Naive thymus-derived CD4-positive, alpha-beta T cell (primary cell): ENCODE measurements at regions of chr20 and their contacts with region 1.

Region 1: DNA sequence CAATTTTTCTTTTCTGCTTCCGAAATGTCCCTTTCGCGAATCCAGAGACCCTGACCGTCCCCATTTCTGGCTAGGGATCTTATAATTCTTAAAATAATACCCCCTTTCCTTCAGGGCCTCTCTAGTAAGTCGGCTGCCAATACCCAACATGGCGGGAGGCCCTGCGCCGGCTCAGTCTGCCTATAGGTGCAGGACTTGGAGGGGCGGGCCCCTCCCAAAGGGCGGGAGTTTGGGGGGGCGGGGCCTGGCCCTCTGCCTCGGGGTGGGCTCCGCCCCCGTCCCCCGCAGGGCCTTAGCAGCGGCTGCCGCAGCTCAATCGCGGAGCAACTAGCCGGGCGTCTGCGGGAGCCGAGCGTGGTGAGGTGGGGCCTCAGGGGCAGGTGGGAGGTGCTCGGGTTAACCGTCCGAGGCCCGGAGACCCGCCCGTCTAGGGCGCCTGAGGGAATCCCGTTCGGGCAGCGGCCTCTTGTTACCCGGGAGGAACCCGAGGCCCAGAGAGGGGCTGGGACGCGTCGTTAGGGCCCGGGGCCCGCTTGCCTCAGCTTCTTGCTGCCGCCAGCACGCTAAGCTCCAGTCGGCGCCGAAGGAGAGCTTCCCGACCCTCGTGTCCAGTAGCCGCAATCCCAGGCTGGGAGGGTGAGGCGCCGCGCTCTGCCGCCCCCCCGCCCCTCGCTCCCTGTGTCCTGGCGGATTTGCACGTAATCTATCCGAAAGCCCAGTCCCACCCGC is at the start of gene CEP250:
- DNase-seq: peak; percentile 89 to 97 (median 96)
- ATAC-seq: peak; percentile 99
- H3K4me3 ChIP-seq: peak within 1 kb of the TSS; percentile 94
- H3K4me3 Mint-ChIP-seq: peak within 1 kb of the TSS; percentile 82 to 98 (median 93)
- H3K27ac ChIP-seq: peak within 1 kb of the TSS; percentile 94
- H3K27ac Mint-ChIP-seq: peak within 1 kb of the TSS; percentile 86 to 99 (median 98)
- H3K4me1 ChIP-seq: no peaks in the 10 kb centered on the region
- H3K4me1 Mint-ChIP-seq: peaks cover 0 to 38% (median 23%) of the 10 kb centered on the region in 7 donors
- H3K27me3 ChIP-seq: no peaks in the 10 kb centered on the region
- H3K27me3 Mint-ChIP-seq: no peaks in the 10 kb centered on the region
- total RNA-seq, gene CEP250: 34.5 to 75.0 (median 70.7) TPM

Region 2: GRCh38 chr20:34825530-34826362 is 629.3 kb before region 1 on chr20 and contains the start of gene NCOA6:
- CTCF ChIA-PET with region 1: no interaction called
- POLR2A ChIA-PET with region 1: no interaction called
- intact Hi-C with region 1: loop called in 1 of 2 experiments (anchors 1 kb)
- DNase-seq: peak; percentile 56 to 86 (median 74)
- ATAC-seq: peak; percentile 90
- H3K4me3 ChIP-seq: peak within 1 kb of the TSS; percentile 78
- H3K4me3 Mint-ChIP-seq: peak within 1 kb of the TSS; percentile 83 to 100 (median 98)
- H3K27ac ChIP-seq: peak within 1 kb of the TSS; percentile 76
- H3K27ac Mint-ChIP-seq: peak within 1 kb of the TSS; percentile 85 to 95 (median 91)
- H3K4me1 ChIP-seq: peaks cover 16 to 17% of the 10 kb centered on the region in 2 donors
- H3K4me1 Mint-ChIP-seq: peaks cover 30 to 50% (median 43%) of the 10 kb centered on the region in 7 donors
- H3K27me3 ChIP-seq: no peaks in the 10 kb centered on the region
- H3K27me3 Mint-ChIP-seq: peaks cover 0 to 17% (median 0%) of the 10 kb centered on the region in 5 donors
- total RNA-seq, gene NCOA6: 23.6 to 31.9 (median 29.3) TPM

Region 3: GRCh38 chr20:35277531-35278395 is 177.3 kb before region 1 on chr20 and contains the start of gene MMP24OS:
- CTCF ChIA-PET with region 1: no interaction called
- POLR2A ChIA-PET with region 1: interaction called, 3 read pairs
- intact Hi-C with region 1: loop called in 1 of 2 experiments (anchors 2 kb)
- DNase-seq: peak; percentile 77 to 90 (median 87)
- ATAC-seq: peak; percentile 95
- H3K4me3 ChIP-seq: peak within 1 kb of the TSS; percentile 99
- H3K4me3 Mint-ChIP-seq: peak within 1 kb of the TSS; percentile 84 to 97 (median 96)
- H3K27ac ChIP-seq: peak within 1 kb of the TSS; percentile 96
- H3K27ac Mint-ChIP-seq: peak within 1 kb of the TSS; percentile 95 to 99 (median 98)
- H3K4me1 ChIP-seq: peaks cover 11 to 18% of the 10 kb centered on the region in 2 donors
- H3K4me1 Mint-ChIP-seq: peaks cover 9 to 46% (median 28%) of the 10 kb centered on the region in 7 donors
- H3K27me3 ChIP-seq: no peaks in the 10 kb centered on the region
- H3K27me3 Mint-ChIP-seq: no peaks in the 10 kb centered on the region
- total RNA-seq, gene MMP24OS: 43.8 to 88.6 (median 69.4) TPM

Region 4: DNA sequence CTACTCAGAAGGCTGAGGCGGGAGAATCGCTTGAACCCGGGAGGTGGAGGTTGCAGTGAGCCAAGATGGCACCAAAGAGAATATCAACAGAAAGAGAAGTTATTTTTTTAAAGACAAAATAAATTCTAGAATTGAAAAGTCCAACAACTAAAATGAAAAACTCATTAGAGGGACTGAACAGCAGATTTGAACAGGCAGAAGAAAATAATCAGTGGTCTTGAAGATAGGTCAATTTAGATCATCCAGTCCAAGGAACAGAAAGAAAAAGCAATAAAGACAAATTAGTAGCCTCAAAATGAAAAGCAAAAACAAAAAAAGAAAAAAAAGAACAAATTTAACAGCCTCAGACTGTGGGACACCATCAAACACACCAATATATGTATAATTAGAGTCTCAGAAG is 49.3 kb before region 1 on chr20:
- CTCF ChIA-PET with region 1: no interaction called
- POLR2A ChIA-PET with region 1: no interaction called
- intact Hi-C with region 1: no loop called
- DNase-seq: no peak
- ATAC-seq: no peak
- H3K4me3 ChIP-seq: no peak overlapping the region
- H3K4me3 Mint-ChIP-seq: no peak overlapping the region
- H3K27ac ChIP-seq: no peak overlapping the region
- H3K27ac Mint-ChIP-seq: peak overlapping the region in 1 of 9 donors; percentile 64
- H3K4me1 ChIP-seq: peaks cover 8 to 9% of the 10 kb centered on the region in 2 donors
- H3K4me1 Mint-ChIP-seq: peaks cover 5 to 31% (median 22%) of the 10 kb centered on the region in 7 donors
- H3K27me3 ChIP-seq: no peaks in the 10 kb centered on the region
- H3K27me3 Mint-ChIP-seq: no peaks in the 10 kb centered on the region

Region 5: GRCh38 chr20:35490736-35491181 is 35.7 kb after region 1 on chr20:
- CTCF ChIA-PET with region 1: interaction called, 3 read pairs
- POLR2A ChIA-PET with region 1: interaction called, 32 read pairs
- intact Hi-C with region 1: loop called (anchors 1 to 2 kb)
- DNase-seq: peak; percentile 27 to 77 (median 67)
- ATAC-seq: peak; percentile 99
- H3K4me3 ChIP-seq: peak overlapping the region; percentile 92
- H3K4me3 Mint-ChIP-seq: peak overlapping the region; percentile 99 to 100 (median 99)
- H3K27ac ChIP-seq: peak overlapping the region; percentile 84
- H3K27ac Mint-ChIP-seq: peak overlapping the region; percentile 98 to 100 (median 99)
- H3K4me1 ChIP-seq: peaks cover 23 to 27% of the 10 kb centered on the region in 2 donors
- H3K4me1 Mint-ChIP-seq: peaks cover 47 to 92% (median 72%) of the 10 kb centered on the region in 7 donors
- H3K27me3 ChIP-seq: no peaks in the 10 kb centered on the region
- H3K27me3 Mint-ChIP-seq: no peaks in the 10 kb centered on the region

Region 6: DNA sequence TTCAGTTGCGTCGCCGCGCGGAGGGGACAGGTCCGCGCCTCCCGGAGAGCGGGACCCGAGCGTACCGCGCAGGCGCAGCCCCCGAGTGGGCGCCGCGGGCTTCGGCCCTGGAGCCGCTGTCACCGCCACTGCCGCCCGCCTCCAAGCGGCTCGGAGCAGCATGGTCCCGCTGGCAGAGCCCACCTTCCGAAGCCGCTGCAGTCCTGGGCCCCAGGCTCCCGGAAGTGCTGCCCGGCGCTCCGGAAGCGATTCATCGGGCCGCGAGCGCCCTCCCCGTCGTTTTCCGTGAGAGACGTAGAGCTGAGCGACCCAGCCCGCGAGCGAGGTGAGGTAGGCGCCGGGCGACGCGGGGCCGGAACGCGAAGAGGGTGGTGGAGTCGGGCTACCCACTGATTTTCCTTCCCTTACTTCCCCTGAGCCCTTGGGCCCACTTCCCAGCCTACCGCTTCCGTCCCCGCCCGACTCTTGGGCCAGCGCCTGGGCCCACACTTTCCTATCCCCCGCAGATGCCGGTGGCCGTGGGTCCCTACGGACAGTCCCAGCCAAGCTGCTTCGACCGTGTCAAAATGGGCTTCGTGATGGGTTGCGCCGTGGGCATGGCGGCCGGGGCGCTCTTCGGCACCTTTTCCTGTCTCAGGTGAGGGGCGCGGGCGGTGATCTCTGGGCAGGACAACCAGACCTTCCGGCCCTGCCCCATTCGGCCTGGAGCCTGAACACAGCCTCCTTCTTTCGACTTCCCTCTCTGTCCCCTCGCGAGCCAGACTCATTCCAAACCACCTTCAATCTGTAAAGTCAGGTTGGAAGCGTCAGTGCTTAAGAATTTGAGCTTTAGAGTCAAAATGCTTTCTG is 244.3 kb after region 1 on chr20 and contains the starts of genes NFS1 and ROMO1:
- CTCF ChIA-PET with region 1: no interaction called
- POLR2A ChIA-PET with region 1: interaction called, 5 read pairs
- intact Hi-C with region 1: loop called in 1 of 2 experiments (anchors 1 kb)
- DNase-seq: peak; percentile 71 to 87 (median 82)
- ATAC-seq: peak; percentile 92
- H3K4me3 ChIP-seq: peak within 1 kb of the TSS; percentile 89
- H3K4me3 Mint-ChIP-seq: peak within 1 kb of the TSS; percentile 90 to 99 (median 98)
- H3K27ac ChIP-seq: peak within 1 kb of the TSS; percentile 87
- H3K27ac Mint-ChIP-seq: peak within 1 kb of the TSS; percentile 95 to 99 (median 97)
- H3K4me1 ChIP-seq: peaks cover 13 to 16% of the 10 kb centered on the region in 2 donors
- H3K4me1 Mint-ChIP-seq: peaks cover 15 to 66% (median 52%) of the 10 kb centered on the region in 7 donors
- H3K27me3 ChIP-seq: no peaks in the 10 kb centered on the region
- H3K27me3 Mint-ChIP-seq: no peaks in the 10 kb centered on the region
- total RNA-seq, gene NFS1: 18.2 to 41.1 (median 35.0) TPM
- total RNA-seq, gene ROMO1: 33.2 to 85.5 (median 38.5) TPM